PC-9 (cell line): ENCODE measurements at regions of chr20 and their contacts with region 1.

Region 1: DNA sequence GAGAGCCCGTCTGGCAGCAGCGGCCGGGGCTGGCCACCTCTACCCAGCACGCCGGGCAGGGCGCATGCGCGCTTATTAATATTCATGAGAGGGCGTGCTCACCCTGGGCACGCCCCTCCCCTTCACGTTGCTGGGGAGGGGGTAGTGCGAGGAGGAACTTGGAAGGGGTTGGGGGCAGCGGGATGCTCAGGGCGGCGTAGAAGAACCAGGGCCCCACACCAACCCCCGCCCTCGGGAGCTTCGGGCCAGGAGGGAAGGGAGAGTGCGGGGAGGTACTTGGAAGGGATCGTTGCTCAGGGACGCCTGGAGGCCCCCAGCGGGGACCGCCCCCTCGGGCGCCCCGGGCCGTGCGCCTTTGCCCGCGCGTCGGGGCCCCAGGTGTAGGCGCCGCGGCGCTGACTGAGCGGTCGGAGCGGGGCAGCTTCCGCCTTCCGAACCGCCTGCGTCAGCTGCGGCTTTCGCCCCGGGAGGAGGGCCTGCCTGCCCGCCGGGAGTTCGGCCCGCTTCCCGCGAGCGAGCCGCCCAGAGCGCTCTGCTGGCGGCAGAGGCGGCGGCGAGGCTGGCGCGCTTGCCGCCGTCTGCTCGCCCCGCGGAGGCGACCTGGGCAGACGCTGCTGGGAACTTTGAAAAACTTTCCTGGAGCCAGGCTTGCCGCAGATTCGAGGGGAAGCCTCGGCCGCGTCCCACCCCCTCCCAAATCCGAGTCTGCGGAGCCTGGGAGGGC is at the start of gene JAG1:
- DNase-seq: peak; percentile 79 to 97
- H3K4me3 ChIP-seq: peak within 1 kb of the TSS; percentile 84
- H3K27ac ChIP-seq: peak within 1 kb of the TSS; percentile 97
- H3K4me1 ChIP-seq: peaks cover 16% of the 10 kb centered on the region
- H3K27me3 ChIP-seq: no peaks in the 10 kb centered on the region
- CTCF ChIP-seq: no peak
- total RNA-seq, gene JAG1: 42.9 and 51.5 TPM in 2 replicates

Region 2: DNA sequence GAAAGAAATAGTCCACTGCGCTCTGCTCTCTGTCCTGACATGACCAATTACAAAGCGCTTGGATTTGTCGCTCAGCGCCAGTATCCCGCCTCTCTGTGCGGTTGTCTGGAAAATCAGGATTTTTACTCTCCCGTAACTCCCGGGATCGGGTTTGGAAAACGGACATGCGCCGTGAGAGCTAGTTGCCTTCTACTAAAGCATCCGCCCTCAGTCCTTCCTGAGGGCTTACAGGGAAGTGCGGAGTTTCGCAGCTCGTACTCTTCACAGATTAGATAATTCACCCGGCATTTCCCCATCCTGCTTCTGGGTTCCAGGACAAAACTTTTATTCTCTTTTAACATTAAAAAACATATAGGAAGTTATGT is 239.7 kb before region 1 on chr20:
- CTCF ChIA-PET with region 1: interaction called, 4 read pairs
- POLR2A ChIA-PET with region 1: interaction called, 6 read pairs
- intact Hi-C with region 1: loop called (anchors 1 kb)
- DNase-seq: peak; percentile 94 to 95
- H3K4me3 ChIP-seq: peak overlapping the region; percentile 90
- H3K27ac ChIP-seq: peak overlapping the region; percentile 96
- H3K4me1 ChIP-seq: no peaks in the 10 kb centered on the region; the same call in 1 of the 2 replicates
- H3K27me3 ChIP-seq: no peaks in the 10 kb centered on the region
- CTCF ChIP-seq: no peak

Region 3: DNA sequence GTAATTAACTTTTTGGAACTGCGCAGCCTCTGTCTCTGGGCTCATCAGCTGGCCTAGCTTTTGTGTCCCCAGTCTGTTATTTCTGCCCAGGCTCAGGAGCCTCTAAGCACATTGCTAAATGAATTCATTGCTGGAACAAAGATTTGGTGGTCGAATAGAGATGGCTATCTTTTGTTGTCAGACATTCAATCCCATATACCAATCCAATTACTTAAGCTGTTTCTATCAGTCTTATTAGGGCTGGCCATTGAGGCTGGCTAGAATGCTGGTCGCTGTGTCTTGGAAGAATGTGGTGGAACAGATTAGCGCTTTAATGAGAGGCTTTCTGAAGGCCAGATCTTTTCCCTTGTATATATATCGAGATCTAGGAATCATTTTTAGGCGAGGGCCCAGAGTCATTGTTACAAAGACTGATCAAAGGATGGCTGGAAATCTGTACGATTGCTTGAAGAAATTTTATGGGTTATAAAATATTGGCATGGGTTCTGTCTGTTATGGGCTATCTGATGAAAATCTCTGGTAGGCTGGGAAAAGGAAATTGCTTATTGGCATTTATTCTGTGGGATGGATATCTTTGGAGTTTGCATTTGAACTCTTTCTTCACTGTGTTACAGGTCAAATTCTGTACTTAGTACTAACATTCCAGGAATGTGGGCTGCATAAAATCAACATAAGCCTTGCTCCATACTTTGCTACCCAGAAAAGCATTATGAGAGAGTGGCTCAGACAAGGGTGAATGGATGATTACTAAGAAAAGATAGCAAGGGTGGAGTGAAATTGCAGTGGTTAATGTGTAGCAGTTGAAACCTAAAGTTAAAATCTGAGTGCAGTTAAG is 34.4 kb after region 1 on chr20:
- CTCF ChIA-PET with region 1: no interaction called
- POLR2A ChIA-PET with region 1: no interaction called
- intact Hi-C with region 1: loop called (anchors 2 kb)
- DNase-seq: peak in 1 of 2 experiments; percentile 79
- H3K4me3 ChIP-seq: 0 out of 2 replicates have a peak overlapping the region, but pooled peaks have one; percentile 0
- H3K27ac ChIP-seq: peak overlapping the region; percentile 57
- H3K4me1 ChIP-seq: peaks cover 47% of the 10 kb centered on the region
- H3K27me3 ChIP-seq: no peaks in the 10 kb centered on the region
- CTCF ChIP-seq: no peak

Region 4: GRCh38 chr20:11001767-11002540 is 327.8 kb after region 1 on chr20:
- CTCF ChIA-PET with region 1: no interaction called
- POLR2A ChIA-PET with region 1: no interaction called
- intact Hi-C with region 1: loop called (anchors 1 kb)
- DNase-seq: peak; percentile 79 to 96
- H3K4me3 ChIP-seq: no peak overlapping the region
- H3K27ac ChIP-seq: peak overlapping the region; percentile 94
- H3K4me1 ChIP-seq: peaks cover 27% of the 10 kb centered on the region
- H3K27me3 ChIP-seq: no peaks in the 10 kb centered on the region
- CTCF ChIP-seq: no peak

Region 5: DNA sequence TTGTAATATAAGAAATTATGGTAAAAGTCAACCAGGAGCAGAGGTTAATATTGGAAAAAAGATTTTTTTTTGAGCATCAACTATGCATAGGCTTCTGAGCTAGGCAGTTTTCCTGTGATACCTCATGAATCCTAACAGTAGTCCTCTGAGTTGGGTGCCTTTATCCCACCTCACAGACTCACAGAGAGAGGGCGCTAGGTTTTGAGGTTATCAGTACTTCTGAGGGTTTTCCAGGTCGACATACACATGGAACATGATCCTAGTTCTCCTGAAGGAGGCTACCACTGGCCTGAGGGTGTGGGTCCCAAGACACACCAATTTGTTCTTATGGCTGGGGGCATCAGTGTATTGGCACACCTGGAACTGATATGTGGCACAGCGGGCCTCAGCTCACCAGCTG is 358.5 kb after region 1 on chr20:
- CTCF ChIA-PET with region 1: no interaction called
- POLR2A ChIA-PET with region 1: no interaction called
- intact Hi-C with region 1: no loop called
- DNase-seq: no peak
- H3K4me3 ChIP-seq: no peak overlapping the region
- H3K27ac ChIP-seq: no peak overlapping the region
- H3K4me1 ChIP-seq: no peaks in the 10 kb centered on the region
- H3K27me3 ChIP-seq: no peaks in the 10 kb centered on the region
- CTCF ChIP-seq: no peak

Region 6: DNA sequence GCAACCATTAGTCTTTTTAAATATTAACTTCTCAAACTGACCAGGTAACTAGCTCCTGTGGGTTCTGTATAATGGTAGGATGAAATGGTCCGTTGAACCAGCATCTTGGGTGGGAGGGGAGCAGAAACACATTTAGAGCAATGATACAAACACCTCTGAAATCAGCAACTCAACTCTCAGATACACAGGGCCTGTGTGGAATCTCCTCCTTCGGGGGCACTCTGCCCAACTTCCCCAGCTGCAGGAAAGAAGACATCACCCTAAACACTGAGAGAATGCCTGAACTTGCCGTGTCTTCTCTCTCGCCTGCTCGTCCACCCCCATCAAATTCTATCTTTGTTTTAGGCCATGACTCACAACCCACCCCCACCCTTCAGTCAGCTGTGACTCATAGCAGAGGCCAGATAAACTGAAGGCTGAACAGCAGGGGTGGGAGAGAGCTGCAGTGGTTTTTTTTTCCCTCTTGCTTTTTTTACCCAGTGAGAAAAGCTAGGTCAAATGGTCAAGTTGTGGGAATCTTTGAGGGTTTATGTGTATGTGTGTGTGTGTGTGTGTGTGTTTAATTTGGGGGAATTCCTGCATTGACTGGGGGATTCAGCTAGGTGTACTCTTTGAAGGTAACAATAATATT is 593.1 kb after region 1 on chr20:
- CTCF ChIA-PET with region 1: interaction called, 10 read pairs
- POLR2A ChIA-PET with region 1: interaction called, 8 read pairs
- intact Hi-C with region 1: loop called (anchors 1 kb)
- DNase-seq: peak; percentile 62 to 84
- H3K4me3 ChIP-seq: peak overlapping the region; percentile 19; the same call in 1 of the 2 replicates
- H3K27ac ChIP-seq: peak overlapping the region; percentile 61
- H3K4me1 ChIP-seq: peaks cover 21% of the 10 kb centered on the region
- H3K27me3 ChIP-seq: no peaks in the 10 kb centered on the region
- CTCF ChIP-seq: no peak

Region 7: GRCh38 chr20:11544029-11544678 is 870.0 kb after region 1 on chr20:
- CTCF ChIA-PET with region 1: no interaction called
- POLR2A ChIA-PET with region 1: no interaction called
- intact Hi-C with region 1: loop called (anchors 1 kb)
- DNase-seq: peak; percentile 49 to 62
- H3K4me3 ChIP-seq: no peak overlapping the region
- H3K27ac ChIP-seq: peak overlapping the region; percentile 11
- H3K4me1 ChIP-seq: peaks cover 13% of the 10 kb centered on the region
- H3K27me3 ChIP-seq: no peaks in the 10 kb centered on the region
- CTCF ChIP-seq: peak; percentile 81